ENCODE measurements at regions of chr10 and their contacts with region 1.

Region 1: GRCh38 chr10:100518761-100519241 is 860 bp downstream of the SEC31B start:
- DNase-seq: peak; percentile 71
- H3K4me3 Mint-ChIP-seq: no peak overlapping the region
- H3K27ac Mint-ChIP-seq: peak overlapping the region; percentile 37
- H3K4me1 Mint-ChIP-seq: peaks cover 39% of the 10 kb centered on the region
- H3K27me3 Mint-ChIP-seq: no peaks in the 10 kb centered on the region

Region 2: DNA sequence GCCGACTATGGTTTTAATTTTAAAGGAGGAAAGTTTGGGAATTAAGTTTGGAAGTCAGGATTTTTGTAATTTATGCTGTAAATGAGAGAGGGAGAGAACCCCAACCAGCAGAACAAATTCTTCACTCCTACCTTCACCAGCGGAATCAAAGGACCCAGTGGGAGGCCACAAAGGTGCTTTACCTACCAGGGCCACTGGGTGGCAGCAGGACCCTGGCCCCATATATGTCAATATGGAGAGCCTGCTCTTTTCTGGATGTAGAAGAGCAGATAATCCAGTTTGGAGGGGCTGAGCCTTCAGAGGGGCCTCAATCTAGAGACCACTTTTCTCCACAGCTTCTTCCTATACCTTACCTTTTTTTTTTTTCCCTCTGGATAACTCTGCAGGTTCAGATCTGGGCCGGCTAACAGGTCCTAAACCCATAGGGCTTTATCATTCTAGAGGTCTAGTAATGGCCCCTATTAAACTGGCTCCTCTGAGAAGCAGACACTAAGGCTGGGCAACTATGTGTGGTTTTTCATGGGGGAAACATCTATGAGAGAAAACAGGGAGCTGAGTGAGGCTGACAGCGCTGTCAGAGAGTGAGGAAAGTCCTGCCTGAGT is 180.3 kb before region 1 on chr10:
- CTCF ChIA-PET with region 1: interaction called, 29 read pairs
- POLR2A ChIA-PET with region 1: no interaction called
- DNase-seq: peak; percentile 85
- H3K4me3 Mint-ChIP-seq: no peak overlapping the region
- H3K27ac Mint-ChIP-seq: no peak overlapping the region
- H3K4me1 Mint-ChIP-seq: peaks cover 13% of the 10 kb centered on the region
- H3K27me3 Mint-ChIP-seq: peaks cover 12% of the 10 kb centered on the region

Region 3: DNA sequence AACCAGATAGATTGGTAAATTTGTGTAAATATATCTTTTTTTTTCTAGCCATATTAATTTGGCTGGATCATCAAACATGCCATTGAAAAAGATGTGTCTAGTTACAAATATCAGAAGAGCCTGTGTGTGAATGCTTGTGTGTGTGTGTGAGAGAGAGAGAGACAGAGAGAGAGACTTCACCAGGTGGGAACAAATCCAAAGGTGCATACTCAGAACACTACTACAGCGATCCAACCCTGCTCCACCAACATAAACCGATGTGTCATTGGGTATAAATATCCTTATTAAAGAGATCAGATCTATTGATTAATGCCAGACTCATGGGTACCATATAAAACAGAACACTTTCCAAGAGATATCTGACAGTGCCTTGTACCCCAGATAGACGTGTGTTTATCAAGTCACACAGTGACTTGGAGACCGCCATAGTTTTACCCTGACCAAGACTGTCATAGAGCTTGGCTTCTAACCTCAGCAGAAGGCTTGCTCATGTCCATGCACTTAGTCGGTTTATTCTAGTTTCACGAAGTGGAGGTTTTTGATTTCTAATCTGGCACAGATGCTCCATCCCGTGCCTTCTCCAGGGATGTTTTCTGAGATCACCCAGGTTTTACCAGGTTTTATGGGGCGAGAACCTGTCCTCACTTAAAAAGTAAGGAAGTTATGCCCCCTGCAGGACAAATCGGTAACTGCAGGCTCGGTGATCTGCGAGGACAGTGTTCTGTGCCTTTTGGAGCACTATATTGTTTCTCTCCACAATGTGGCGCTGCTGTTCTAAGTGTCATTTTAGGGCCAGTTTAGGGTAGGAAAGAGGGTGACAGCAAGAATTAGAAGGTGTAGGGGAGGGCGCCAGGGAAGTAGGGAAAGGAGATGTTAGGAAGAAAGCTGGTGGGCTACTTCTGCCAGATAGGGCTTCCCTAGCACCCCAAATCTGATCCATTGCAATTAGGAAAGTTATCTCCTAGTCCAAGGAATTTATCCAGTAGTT is 85.3 kb before region 1 on chr10:
- CTCF ChIA-PET with region 1: interaction called, 59 read pairs
- POLR2A ChIA-PET with region 1: interaction called, 3 read pairs
- DNase-seq: peak; percentile 97
- H3K4me3 Mint-ChIP-seq: no peak overlapping the region
- H3K27ac Mint-ChIP-seq: no peak overlapping the region
- H3K4me1 Mint-ChIP-seq: peaks cover 6% of the 10 kb centered on the region
- H3K27me3 Mint-ChIP-seq: no peaks in the 10 kb centered on the region

Region 4: GRCh38 chr10:100446130-100446761 is 72.6 kb before region 1 on chr10:
- CTCF ChIA-PET with region 1: interaction called, 10 read pairs
- POLR2A ChIA-PET with region 1: no interaction called
- DNase-seq: no peak
- H3K4me3 Mint-ChIP-seq: no peak overlapping the region
- H3K27ac Mint-ChIP-seq: no peak overlapping the region
- H3K4me1 Mint-ChIP-seq: no peaks in the 10 kb centered on the region
- H3K27me3 Mint-ChIP-seq: peaks cover 4% of the 10 kb centered on the region

Region 5: DNA sequence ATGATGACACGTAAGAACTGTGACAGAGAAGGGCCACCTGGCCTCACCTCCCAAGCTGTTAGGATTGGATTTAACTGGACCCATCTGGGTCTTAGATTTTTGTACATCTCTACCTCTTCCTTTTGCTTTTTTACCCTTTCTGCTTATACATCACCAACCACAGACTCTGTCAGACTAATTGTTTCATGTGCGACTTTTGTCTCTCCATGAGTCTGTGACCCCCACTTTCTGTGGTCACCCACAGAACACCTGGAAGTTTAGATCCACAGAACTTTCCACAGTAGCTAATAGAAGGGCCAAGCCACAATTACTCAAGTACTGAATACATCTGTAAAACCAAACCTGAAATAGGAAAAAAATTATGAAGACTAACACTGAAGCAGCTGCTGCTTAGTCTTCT is 22.2 kb before region 1 on chr10:
- CTCF ChIA-PET with region 1: interaction called, 22 read pairs
- POLR2A ChIA-PET with region 1: interaction called, 96 read pairs
- DNase-seq: no peak
- H3K4me3 Mint-ChIP-seq: no peak overlapping the region
- H3K27ac Mint-ChIP-seq: peak overlapping the region; percentile 17
- H3K4me1 Mint-ChIP-seq: peaks cover 51% of the 10 kb centered on the region
- H3K27me3 Mint-ChIP-seq: no peaks in the 10 kb centered on the region

Region 6: GRCh38 chr10:100535715-100536353 is 17.0 kb after region 1 on chr10 and contains the start of gene HIF1AN:
- CTCF ChIA-PET with region 1: interaction called, 13 read pairs
- POLR2A ChIA-PET with region 1: interaction called, 135 read pairs
- DNase-seq: peak; percentile 92
- H3K4me3 Mint-ChIP-seq: no peak within 1 kb of the TSS
- H3K27ac Mint-ChIP-seq: peak within 1 kb of the TSS; percentile 22
- H3K4me1 Mint-ChIP-seq: peaks cover 16% of the 10 kb centered on the region
- H3K27me3 Mint-ChIP-seq: no peaks in the 10 kb centered on the region
- total RNA-seq, gene HIF1AN: 57.7 to 58.8 TPM